IMR-90 (cell line): ENCODE measurements at regions of chr6 and their contacts with region 1.

Region 1: GRCh38 chr6:135535989-135536414 is 38.5 kb upstream of the AHI1 start:
- DNase-seq: peak; percentile 98
- ATAC-seq: peak; percentile 85
- H3K4me3 ChIP-seq: no peak overlapping the region
- H3K27ac ChIP-seq: peak overlapping the region; percentile 24
- H3K4me1 ChIP-seq: peaks cover 9% of the 10 kb centered on the region
- H3K27me3 ChIP-seq: no peaks in the 10 kb centered on the region
- CTCF ChIP-seq: peak; percentile 80
- POLR2A ChIP-seq: no peak
- RAD21 ChIP-seq: peak; percentile 83

Region 2: GRCh38 chr6:135830452-135830881 is 294.5 kb after region 1 on chr6:
- CTCF ChIA-PET with region 1: no interaction called
- POLR2A ChIA-PET with region 1: no interaction called
- dilution Hi-C with region 1: no loop called
- in situ Hi-C with region 1: loop called (anchors 10 kb)
- intact Hi-C with region 1: no loop called
- DNase-seq: peak; percentile 85
- ATAC-seq: peak; percentile 76
- H3K4me3 ChIP-seq: no peak overlapping the region
- H3K27ac ChIP-seq: no peak overlapping the region
- H3K4me1 ChIP-seq: peaks cover 6% of the 10 kb centered on the region
- H3K27me3 ChIP-seq: no peaks in the 10 kb centered on the region
- CTCF ChIP-seq: no peak
- POLR2A ChIP-seq: no peak
- RAD21 ChIP-seq: no peak

Region 3: DNA sequence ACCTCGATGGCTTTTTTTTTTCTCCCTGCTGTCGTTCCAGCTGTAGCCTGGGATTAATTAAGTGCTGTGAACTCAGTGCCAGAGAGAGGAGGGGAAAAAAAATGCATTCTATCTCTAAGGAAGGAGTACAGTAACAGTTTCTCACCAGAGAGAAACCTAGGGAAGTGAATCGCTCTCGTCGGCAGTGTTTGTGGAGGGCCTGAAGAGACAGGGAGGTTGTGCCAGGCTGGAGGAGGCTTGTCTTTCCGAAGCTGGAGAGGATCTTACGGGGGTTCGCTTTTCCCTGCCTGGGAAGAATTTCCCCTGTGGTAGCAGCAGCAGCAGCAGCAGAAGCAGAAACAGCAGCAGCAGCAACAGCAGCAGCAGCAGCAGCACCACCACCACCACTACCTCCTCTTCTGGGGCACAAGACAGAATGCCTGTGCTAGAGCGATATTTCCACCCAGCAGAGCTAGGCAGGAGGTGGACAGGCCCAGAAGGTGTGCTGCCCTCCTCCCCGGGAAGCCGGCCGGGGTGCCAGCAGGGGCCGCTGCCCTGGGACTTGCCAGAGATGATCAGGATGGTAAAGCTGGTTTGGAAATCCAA is 502.0 kb after region 1 on chr6:
- CTCF ChIA-PET with region 1: no interaction called
- POLR2A ChIA-PET with region 1: no interaction called
- dilution Hi-C with region 1: no loop called
- in situ Hi-C with region 1: no loop called
- intact Hi-C with region 1: loop called (anchors 2 kb)
- DNase-seq: peak; percentile 72
- ATAC-seq: peak; percentile 55
- H3K4me3 ChIP-seq: peak overlapping the region; percentile 88
- H3K27ac ChIP-seq: peak overlapping the region; percentile 98
- H3K4me1 ChIP-seq: peaks cover 24% of the 10 kb centered on the region
- H3K27me3 ChIP-seq: no peaks in the 10 kb centered on the region
- CTCF ChIP-seq: peak; percentile 40
- POLR2A ChIP-seq: peak; percentile 45; the same call in 1 of the 2 replicates
- RAD21 ChIP-seq: no peak; the same call in 1 of the 2 replicates

Region 4: GRCh38 chr6:136317021-136317694 is 781.2 kb after region 1 on chr6:
- CTCF ChIA-PET with region 1: no interaction called
- POLR2A ChIA-PET with region 1: no interaction called
- dilution Hi-C with region 1: no loop called
- in situ Hi-C with region 1: no loop called
- intact Hi-C with region 1: loop called (anchors 1 kb)
- DNase-seq: peak; percentile 69
- ATAC-seq: peak; percentile 96
- H3K4me3 ChIP-seq: no peak overlapping the region
- H3K27ac ChIP-seq: no peak overlapping the region
- H3K4me1 ChIP-seq: no peaks in the 10 kb centered on the region
- H3K27me3 ChIP-seq: peaks cover 7% of the 10 kb centered on the region
- CTCF ChIP-seq: peak; percentile 81
- POLR2A ChIP-seq: no peak
- RAD21 ChIP-seq: peak; percentile 82